Activated B cell treated with CpG ODN at 0.5 μM for 24 hours (primary cell): ENCODE measurements at regions of chrX and their contacts with region 1.

Region 1: GRCh38 chrX:77962068-77962902 is 7.2 kb downstream of the PGAM4 start:
- DNase-seq: no peak
- ATAC-seq: no peak
- H3K4me3 Mint-ChIP-seq: peak overlapping the region; percentile 15
- H3K27ac Mint-ChIP-seq: peak overlapping the region; percentile 56
- H3K4me1 Mint-ChIP-seq: peaks cover 18% of the 10 kb centered on the region
- H3K27me3 Mint-ChIP-seq: no peaks in the 10 kb centered on the region
- CTCF ChIP-seq: no peak

Region 2: DNA sequence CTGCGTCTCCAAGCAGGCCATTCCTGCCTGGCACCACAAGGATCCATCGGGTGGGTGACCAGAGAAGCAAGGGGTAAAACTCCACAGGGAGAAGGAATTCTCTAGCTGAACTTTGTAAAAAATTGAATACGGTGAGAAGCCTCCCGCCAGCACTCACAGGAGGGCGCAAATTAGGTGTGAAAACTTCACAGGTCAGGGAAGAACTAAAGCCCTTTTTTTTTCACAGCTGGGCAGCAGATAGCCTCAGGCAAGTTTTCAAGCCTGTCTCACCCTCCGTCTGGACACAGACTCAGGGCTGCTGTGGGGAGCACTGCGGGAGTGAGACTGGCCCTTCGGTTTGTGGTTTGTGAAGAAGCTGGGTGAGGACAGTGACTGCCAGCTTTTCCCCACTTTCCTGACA is 739.2 kb before region 1 on chrX:
- CTCF ChIA-PET with region 1: no interaction called
- POLR2A ChIA-PET with region 1: no interaction called
- intact Hi-C with region 1: no loop called
- DNase-seq: no peak
- ATAC-seq: no peak
- H3K4me3 Mint-ChIP-seq: no peak overlapping the region
- H3K27ac Mint-ChIP-seq: no peak overlapping the region
- H3K4me1 Mint-ChIP-seq: no peaks in the 10 kb centered on the region
- H3K27me3 Mint-ChIP-seq: no peaks in the 10 kb centered on the region
- CTCF ChIP-seq: no peak

Region 3: DNA sequence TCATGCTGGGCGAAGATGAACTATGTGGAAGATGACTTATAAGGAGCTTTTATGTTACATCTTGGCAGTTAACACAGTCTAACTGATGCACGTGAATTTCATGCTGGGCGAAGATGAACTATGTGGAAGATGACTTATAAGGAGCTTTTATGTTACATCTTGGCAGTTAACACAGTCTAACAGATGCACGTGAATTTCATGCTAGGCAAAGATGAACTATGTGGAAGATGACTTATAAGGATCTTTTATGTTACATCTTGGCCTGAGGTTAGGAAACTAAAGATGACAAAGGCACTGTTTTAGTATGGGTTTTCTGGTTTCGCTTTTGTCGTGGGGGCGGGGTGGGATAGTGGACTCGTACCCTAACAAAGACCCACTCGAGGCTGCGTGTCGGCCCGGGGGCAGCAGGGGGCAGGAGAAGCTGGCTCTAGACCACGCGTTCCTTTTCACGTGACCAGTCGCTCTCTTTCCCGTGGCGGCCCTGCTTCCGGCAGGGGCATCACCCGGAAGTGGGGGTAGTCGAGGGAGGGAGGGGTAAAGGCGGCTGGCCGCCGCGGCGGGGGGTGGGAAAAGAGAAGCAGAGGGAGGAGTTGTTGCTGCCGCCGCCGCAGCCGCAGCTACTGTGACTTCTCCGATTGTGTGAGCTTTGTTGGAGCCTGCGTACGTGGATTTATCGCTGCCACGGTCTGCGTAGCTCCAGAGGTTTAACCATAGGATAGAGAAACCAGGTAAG is 52.0 kb before region 1 on chrX and contains the start of gene ATP7A:
- CTCF ChIA-PET with region 1: no interaction called
- POLR2A ChIA-PET with region 1: no interaction called
- intact Hi-C with region 1: no loop called
- DNase-seq: peak; percentile 72
- ATAC-seq: peak; percentile 92
- H3K4me3 Mint-ChIP-seq: peak within 1 kb of the TSS; percentile 96
- H3K27ac Mint-ChIP-seq: peak within 1 kb of the TSS; percentile 93
- H3K4me1 Mint-ChIP-seq: peaks cover 21% of the 10 kb centered on the region
- H3K27me3 Mint-ChIP-seq: no peaks in the 10 kb centered on the region
- CTCF ChIP-seq: no peak
- total RNA-seq, gene ATP7A: 8.2 and 9.4 TPM in 2 replicates

Region 4: GRCh38 chrX:77937271-77937670 is 25.0 kb before region 1 on chrX:
- CTCF ChIA-PET with region 1: no interaction called
- POLR2A ChIA-PET with region 1: no interaction called
- intact Hi-C with region 1: loop called (anchors 2 kb)
- DNase-seq: no peak
- ATAC-seq: no peak
- H3K4me3 Mint-ChIP-seq: no peak overlapping the region
- H3K27ac Mint-ChIP-seq: no peak overlapping the region
- H3K4me1 Mint-ChIP-seq: peaks cover 3% of the 10 kb centered on the region
- H3K27me3 Mint-ChIP-seq: no peaks in the 10 kb centered on the region
- CTCF ChIP-seq: no peak